Panc1 (cell line): ENCODE measurements at regions of chr1 and their contacts with region 1.

Region 1: DNA sequence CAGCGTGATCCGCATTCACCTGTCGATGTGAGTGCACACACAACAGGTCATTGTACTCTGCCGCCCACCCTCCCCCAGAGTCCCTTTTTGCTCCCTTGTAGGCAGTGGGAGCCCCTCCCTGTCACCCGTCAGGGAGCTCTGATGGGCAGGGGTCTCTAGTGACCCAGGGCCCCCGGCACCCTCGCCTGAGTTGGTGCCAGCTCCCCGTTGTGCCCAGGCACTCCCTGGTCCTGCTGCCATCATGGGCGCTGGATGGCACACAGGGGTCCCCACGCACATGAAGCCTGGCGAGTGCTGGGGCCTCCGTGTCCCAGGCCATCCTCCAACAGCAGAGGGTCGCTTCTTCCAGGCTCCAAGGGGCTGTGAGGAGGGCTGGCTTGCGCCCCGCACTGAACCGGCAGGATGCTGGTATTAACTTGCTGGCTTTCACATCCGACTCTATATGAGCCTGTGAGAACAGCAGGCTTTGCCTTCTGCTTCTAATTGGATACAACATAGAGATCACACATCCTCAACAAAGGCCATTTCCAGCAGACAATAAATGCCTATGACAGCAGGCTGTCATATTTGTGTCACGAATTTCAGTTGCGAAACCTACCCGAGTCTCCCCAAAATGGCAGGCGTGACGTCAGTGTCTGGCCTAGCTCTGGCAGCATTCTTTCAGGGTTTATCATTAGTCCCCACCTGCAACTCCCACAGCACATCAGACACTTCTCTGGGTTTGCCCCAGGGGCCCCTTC is 35.4 kb downstream of the KIAA1614 start:
- DNase-seq: no peak
- ATAC-seq: no peak
- H3K4me3 ChIP-seq: no peak overlapping the region
- H3K27ac ChIP-seq: no peak overlapping the region
- H3K4me1 ChIP-seq: no peaks in the 10 kb centered on the region
- H3K27me3 ChIP-seq: no peaks in the 10 kb centered on the region
- CTCF ChIP-seq: no peak

Region 2: DNA sequence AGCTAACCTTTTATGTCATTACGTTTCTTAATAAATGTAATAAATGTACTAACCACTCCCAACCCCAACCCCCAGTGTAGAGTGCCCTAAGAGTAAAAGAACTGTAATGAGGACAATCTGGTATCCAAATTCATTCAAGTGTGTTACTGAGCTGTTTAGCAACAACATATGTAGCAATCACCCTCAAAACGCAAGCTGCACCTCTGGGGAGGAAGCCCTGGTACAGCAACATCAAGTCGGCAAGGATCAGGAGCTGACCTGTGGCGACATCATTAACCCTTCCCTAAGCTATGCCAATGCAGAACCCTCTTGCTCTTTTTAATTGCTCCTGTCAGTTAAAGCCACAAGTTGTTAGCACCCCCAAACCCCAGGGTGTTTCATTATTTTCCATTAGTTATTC is 27.5 kb after region 1 on chr1:
- CTCF ChIA-PET with region 1: no interaction called
- POLR2A ChIA-PET with region 1: interaction called, 11 read pairs
- in situ Hi-C with region 1: no loop called
- intact Hi-C with region 1: no loop called
- DNase-seq: no peak
- ATAC-seq: no peak
- H3K4me3 ChIP-seq: no peak overlapping the region
- H3K27ac ChIP-seq: no peak overlapping the region
- H3K4me1 ChIP-seq: no peaks in the 10 kb centered on the region
- H3K27me3 ChIP-seq: no peaks in the 10 kb centered on the region
- CTCF ChIP-seq: no peak

Region 3: GRCh38 chr1:181064025-181064623 is 116.1 kb after region 1 on chr1:
- CTCF ChIA-PET with region 1: no interaction called
- POLR2A ChIA-PET with region 1: no interaction called
- in situ Hi-C with region 1: no loop called
- intact Hi-C with region 1: no loop called
- DNase-seq: no peak
- ATAC-seq: no peak
- H3K4me3 ChIP-seq: no peak overlapping the region
- H3K27ac ChIP-seq: no peak overlapping the region
- H3K4me1 ChIP-seq: no peaks in the 10 kb centered on the region
- H3K27me3 ChIP-seq: no peaks in the 10 kb centered on the region; the same call in 1 of the 2 replicates
- CTCF ChIP-seq: no peak

Region 4: GRCh38 chr1:181079382-181079781 is 131.3 kb after region 1 on chr1:
- CTCF ChIA-PET with region 1: no interaction called
- POLR2A ChIA-PET with region 1: no interaction called
- in situ Hi-C with region 1: no loop called
- intact Hi-C with region 1: no loop called
- DNase-seq: no peak
- ATAC-seq: no peak
- H3K4me3 ChIP-seq: no peak overlapping the region
- H3K27ac ChIP-seq: no peak overlapping the region
- H3K4me1 ChIP-seq: peaks cover 8% of the 10 kb centered on the region; the same call in 1 of the 2 replicates
- H3K27me3 ChIP-seq: no peaks in the 10 kb centered on the region
- CTCF ChIP-seq: no peak